B cell (primary cell): ENCODE measurements at regions of chr17 and their contacts with region 1.

Region 1: DNA sequence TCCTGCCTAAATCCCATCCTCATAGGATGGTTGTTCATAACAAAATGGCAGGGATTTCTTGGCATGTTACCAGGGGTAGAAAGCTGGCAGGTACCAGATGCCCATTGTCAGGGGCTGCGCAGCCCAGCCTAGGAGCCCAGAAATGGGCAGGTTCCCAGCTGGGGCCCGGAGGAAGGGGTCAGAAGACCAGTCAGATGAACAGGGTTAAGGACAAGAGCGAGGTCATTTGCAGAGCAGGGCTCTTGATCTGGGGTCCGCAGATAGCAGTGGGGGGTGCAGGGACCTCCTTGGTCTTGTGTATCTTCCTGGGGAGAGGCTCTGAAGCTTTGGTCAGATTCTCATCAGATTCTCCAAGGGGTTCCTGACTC is 52.3 kb upstream of the CDC42EP4 start:
- DNase-seq: no peak
- ATAC-seq: no peak
- H3K4me3 ChIP-seq: no peak overlapping the region
- H3K4me3 Mint-ChIP-seq: no peak overlapping the region
- H3K27ac ChIP-seq: no peak overlapping the region
- H3K27ac Mint-ChIP-seq: no peak overlapping the region
- H3K4me1 ChIP-seq: no peaks in the 10 kb centered on the region
- H3K4me1 Mint-ChIP-seq: no peaks in the 10 kb centered on the region
- H3K27me3 ChIP-seq: no peaks in the 10 kb centered on the region
- H3K27me3 Mint-ChIP-seq: no peaks in the 10 kb centered on the region
- CTCF ChIP-seq: no peak

Region 2: DNA sequence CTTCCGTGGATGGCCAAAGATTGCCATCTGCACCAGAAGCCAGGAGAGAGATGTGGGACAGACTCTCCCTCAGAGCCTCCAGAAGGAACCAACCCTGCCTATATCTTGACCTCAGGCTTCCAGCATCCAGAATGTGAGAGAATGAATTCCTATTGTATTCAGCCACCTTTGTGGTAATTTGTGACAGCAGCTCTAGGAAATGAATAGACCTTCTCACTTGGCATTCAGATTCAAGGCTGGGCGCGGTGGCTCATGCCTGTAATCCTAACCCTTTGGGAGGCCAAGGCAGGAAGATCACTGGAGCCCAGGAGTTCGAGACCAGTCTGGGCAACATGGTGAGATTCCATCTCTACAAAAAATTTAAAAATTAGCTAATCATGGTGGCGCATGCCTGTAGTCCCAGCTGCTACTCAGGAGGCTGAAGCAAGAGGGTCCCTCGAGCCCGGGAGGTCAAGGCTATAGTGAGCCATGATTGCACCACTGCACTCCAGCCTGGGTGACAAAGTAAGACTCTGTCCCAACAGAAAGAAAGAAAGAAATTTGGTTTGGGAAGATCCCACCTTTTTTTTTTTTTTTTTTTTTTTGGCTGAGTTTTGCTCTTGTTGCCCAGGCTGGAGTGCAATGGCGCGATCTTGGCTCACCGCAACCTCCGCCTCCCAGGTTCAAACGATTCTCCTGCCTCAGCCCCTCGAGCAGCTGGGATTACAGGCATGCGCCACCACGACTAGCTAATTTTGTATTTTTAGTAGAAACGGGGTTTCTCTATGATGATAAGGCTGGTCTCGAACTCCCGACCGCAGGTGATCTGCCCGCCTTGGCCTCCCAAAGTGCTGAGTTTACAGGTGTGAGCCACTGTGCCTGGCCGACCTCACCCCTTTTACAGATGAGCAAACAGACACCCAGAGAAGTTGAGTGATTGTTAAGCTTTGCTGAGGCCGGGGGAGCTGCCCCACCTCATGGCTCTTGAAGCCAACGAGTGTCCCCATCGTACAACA is 98.2 kb before region 1 on chr17:
- CTCF ChIA-PET with region 1: interaction called, 296 read pairs
- POLR2A ChIA-PET with region 1: interaction called, 11 read pairs
- intact Hi-C with region 1: no loop called
- DNase-seq: no peak
- ATAC-seq: no peak
- H3K4me3 ChIP-seq: no peak overlapping the region
- H3K4me3 Mint-ChIP-seq: no peak overlapping the region
- H3K27ac ChIP-seq: no peak overlapping the region
- H3K27ac Mint-ChIP-seq: no peak overlapping the region
- H3K4me1 ChIP-seq: peaks cover 0 to 3% of the 10 kb centered on the region in 2 donors
- H3K4me1 Mint-ChIP-seq: peaks cover 3% of the 10 kb centered on the region
- H3K27me3 ChIP-seq: no peaks in the 10 kb centered on the region
- H3K27me3 Mint-ChIP-seq: no peaks in the 10 kb centered on the region
- CTCF ChIP-seq: no peak

Region 3: GRCh38 chr17:73291260-73291801 is 72.8 kb before region 1 on chr17:
- CTCF ChIA-PET with region 1: no interaction called
- POLR2A ChIA-PET with region 1: no interaction called
- intact Hi-C with region 1: no loop called
- DNase-seq: no peak
- ATAC-seq: no peak
- H3K4me3 ChIP-seq: no peak overlapping the region
- H3K4me3 Mint-ChIP-seq: no peak overlapping the region
- H3K27ac ChIP-seq: no peak overlapping the region
- H3K27ac Mint-ChIP-seq: no peak overlapping the region
- H3K4me1 ChIP-seq: peaks cover 0 to 13% of the 10 kb centered on the region in 2 donors
- H3K4me1 Mint-ChIP-seq: peaks cover 13% of the 10 kb centered on the region
- H3K27me3 ChIP-seq: peaks cover 0 to 3% (median 0%) of the 10 kb centered on the region in 4 experiments
- H3K27me3 Mint-ChIP-seq: peaks cover 29% of the 10 kb centered on the region
- CTCF ChIP-seq: no peak

Region 4: GRCh38 chr17:74182041-74182723 is 818.0 kb after region 1 on chr17:
- CTCF ChIA-PET with region 1: no interaction called
- POLR2A ChIA-PET with region 1: no interaction called
- intact Hi-C with region 1: no loop called
- DNase-seq: no peak
- ATAC-seq: no peak
- H3K4me3 ChIP-seq: no peak overlapping the region
- H3K4me3 Mint-ChIP-seq: no peak overlapping the region
- H3K27ac ChIP-seq: no peak overlapping the region
- H3K27ac Mint-ChIP-seq: no peak overlapping the region
- H3K4me1 ChIP-seq: no peaks in the 10 kb centered on the region
- H3K4me1 Mint-ChIP-seq: no peaks in the 10 kb centered on the region
- H3K27me3 ChIP-seq: peaks cover 0 to 11% (median 0%) of the 10 kb centered on the region in 4 experiments
- H3K27me3 Mint-ChIP-seq: peaks cover 31% of the 10 kb centered on the region
- CTCF ChIP-seq: no peak